Dorsolateral prefrontal cortex (tissue), 120 donors: ENCODE measurements at regions of chr3 and their contacts with region 1.

Region 1: GRCh38 chr3:149393345-149394160 is 16.1 kb upstream of the TM4SF1 start:
- DNase-seq: peak in 5 of 10 donors; percentile 20 to 69 (median 57)
- H3K4me3 ChIP-seq: no peak overlapping the region
- H3K27ac ChIP-seq: no peak overlapping the region
- H3K27me3 ChIP-seq: peaks cover 0 to 8% (median 0%) of the 10 kb centered on the region in 45 donors
- CTCF ChIP-seq: peak in 55 of 56 donors; percentile 55 to 84 (median 72)

Region 2: GRCh38 chr3:149352556-149352955 is 41.0 kb before region 1 on chr3:
- intact Hi-C with region 1: loop called in 1 of 2 experiments (anchors 5 kb)
- DNase-seq: peak in 7 of 10 donors; percentile 29 to 57 (median 45)
- H3K4me3 ChIP-seq: no peak overlapping the region
- H3K27ac ChIP-seq: no peak overlapping the region
- H3K27me3 ChIP-seq: peaks cover 0 to 23% (median 0%) of the 10 kb centered on the region in 45 donors
- CTCF ChIP-seq: peak; percentile 23 to 83 (median 66)

Region 3: DNA sequence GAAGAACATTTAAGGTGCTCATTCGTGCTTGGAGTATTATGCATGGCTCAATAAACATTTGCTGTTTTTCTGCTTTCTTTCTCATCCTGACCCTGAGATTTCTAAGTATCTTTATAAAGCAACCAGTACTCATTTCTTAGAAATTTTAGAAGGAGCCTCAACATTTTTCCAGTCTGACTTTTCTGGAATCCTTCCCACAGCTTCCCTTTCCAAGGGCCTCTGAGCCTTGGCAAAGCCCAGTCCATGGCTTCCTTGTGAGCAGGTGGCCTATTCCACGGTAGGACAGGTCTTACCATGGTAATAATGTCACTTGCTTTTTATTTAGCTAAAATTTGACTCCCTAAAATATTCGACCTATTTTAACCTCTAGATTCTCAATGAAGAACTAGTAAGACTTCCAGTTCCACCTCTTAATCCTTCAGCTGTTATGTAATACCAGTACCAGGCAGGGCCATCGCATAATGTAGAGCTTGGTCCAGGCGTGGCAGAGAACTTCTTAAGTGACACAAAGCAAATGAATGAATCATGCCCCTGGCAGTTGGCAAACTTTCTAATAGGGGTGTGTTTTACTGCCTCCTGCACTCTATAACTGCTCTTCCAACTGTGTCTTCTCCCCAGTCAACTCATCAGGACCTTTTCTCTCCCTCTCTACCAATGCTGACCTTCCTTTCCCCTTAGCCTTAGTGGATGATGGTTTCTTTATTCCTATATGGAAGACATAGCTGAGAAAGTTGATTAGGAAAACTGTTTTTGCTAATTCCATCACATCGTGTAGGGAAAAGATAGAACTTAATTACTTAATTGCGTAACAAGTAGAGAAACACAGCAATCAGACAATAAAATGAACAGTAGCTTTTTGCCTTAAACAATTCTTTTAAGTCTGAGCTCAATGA is 80.0 kb after region 1 on chr3:
- intact Hi-C with region 1: loop called in 1 of 2 experiments (anchors 10 kb)
- DNase-seq: no peak
- H3K4me3 ChIP-seq: no peak overlapping the region
- H3K27ac ChIP-seq: peak overlapping the region in 1 of 59 donors; percentile 9
- H3K27me3 ChIP-seq: peaks cover 0 to 19% (median 0%) of the 10 kb centered on the region in 45 donors
- CTCF ChIP-seq: no peak